ENCODE measurements at regions of chr5 and their contacts with region 1.

Region 1: DNA sequence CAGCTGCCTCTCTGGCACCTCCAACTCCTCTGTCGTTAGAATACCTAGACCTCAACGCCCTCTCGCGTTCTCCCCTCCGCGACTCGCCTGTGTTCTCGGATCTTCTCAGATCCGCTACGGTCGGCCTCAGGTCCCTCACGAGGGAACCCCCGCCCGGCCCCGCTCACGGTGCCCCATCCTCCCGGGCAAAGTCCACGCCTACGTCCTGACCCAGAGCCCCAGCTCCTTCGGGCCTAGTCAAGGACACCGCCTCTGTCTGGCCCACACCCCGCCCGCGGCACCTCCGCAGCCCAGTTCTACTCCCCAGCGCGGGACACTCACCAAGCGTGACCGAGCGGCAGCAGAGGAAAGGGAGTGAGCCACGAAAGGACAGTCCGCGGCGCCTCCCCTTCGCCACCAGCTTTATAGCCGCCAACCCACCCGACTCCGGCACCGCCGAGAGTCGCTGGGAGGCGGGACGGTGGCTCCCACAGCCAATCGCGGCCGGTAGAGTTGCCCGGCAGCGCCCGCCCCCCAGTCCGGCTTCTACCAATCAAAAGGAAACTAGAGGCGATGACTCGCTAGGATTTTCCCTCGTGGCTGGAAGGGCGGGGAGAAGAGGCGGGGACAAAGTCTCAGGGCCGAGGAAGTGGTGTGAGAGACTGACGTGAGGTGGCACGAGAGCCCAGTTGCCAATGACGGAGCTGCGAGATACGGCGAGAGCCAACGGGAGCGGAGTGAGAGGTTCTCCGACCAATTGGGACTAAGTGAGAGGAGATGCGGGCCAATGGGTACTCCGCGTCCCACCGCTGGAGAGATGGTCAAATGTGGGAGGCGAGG is at the start of gene HMGCS1:
- DNase-seq: peak; percentile 99
- ATAC-seq: peak; percentile 90
- H3K4me3 Mint-ChIP-seq: peak within 1 kb of the TSS; percentile 93
- H3K27ac Mint-ChIP-seq: peak within 1 kb of the TSS; percentile 96
- H3K4me1 Mint-ChIP-seq: peaks cover 71% of the 10 kb centered on the region
- H3K27me3 Mint-ChIP-seq: no peaks in the 10 kb centered on the region
- total RNA-seq, gene HMGCS1: 95.2 to 102 TPM

Region 2: GRCh38 chr5:42994246-42995151 is 318.7 kb before region 1 on chr5:
- CTCF ChIA-PET with region 1: interaction called, 3 read pairs
- POLR2A ChIA-PET with region 1: no interaction called
- intact Hi-C with region 1: loop called in 1 of 2 experiments (anchors 1 kb)
- DNase-seq: peak; percentile 93
- ATAC-seq: peak; percentile 67
- H3K4me3 Mint-ChIP-seq: peak overlapping the region; percentile 98
- H3K27ac Mint-ChIP-seq: peak overlapping the region; percentile 100
- H3K4me1 Mint-ChIP-seq: peaks cover 25% of the 10 kb centered on the region
- H3K27me3 Mint-ChIP-seq: no peaks in the 10 kb centered on the region

Region 3: GRCh38 chr5:43066799-43067741 is 246.2 kb before region 1 on chr5:
- CTCF ChIA-PET with region 1: no interaction called
- POLR2A ChIA-PET with region 1: interaction called, 6 read pairs
- intact Hi-C with region 1: loop called (anchors 1 to 2 kb)
- DNase-seq: peak; percentile 91
- ATAC-seq: peak; percentile 51
- H3K4me3 Mint-ChIP-seq: peak overlapping the region; percentile 97
- H3K27ac Mint-ChIP-seq: peak overlapping the region; percentile 99
- H3K4me1 Mint-ChIP-seq: peaks cover 37% of the 10 kb centered on the region
- H3K27me3 Mint-ChIP-seq: no peaks in the 10 kb centered on the region

Region 4: DNA sequence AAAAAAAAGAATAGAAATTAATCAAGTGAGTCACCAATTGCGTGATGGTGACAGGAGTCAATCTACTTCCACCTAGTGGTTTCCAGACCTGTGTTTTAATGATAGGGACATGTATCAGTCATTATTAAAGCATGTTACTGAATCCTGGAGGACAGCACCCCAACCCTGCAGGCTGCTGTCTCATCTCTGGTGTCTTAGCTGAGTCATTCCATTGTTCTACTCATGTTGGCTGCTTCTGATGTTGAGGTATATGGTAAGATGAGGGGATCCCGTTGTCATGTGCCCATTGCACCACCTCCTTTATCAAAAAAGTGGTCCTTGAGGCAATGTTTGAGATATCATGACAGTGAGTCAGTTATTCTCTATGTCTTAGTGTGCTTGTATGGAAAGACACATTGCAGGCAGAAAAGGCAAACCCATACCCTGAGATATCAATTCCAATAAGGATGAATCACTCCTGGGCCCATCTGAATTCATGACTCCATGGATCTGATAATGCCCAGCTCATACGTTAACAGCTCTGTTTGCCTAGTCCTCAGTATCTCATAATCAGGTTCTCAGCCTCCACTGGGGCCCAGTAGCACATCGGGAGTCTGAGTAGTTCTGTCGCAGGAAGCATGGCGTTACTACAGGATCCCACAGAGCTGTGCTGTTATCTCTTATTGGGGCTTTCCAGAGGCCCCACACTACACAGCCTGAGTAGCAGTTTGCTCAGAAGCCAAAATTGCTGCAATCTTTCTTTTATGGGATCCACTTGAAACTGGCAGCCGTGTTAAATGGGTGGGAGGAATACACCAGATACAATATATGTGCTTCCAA is 31.2 kb before region 1 on chr5:
- CTCF ChIA-PET with region 1: no interaction called
- POLR2A ChIA-PET with region 1: interaction called, 3 read pairs
- intact Hi-C with region 1: loop called in 1 of 2 experiments (anchors 1 kb)
- DNase-seq: peak; percentile 43
- ATAC-seq: peak; percentile 81
- H3K4me3 Mint-ChIP-seq: no peak overlapping the region
- H3K27ac Mint-ChIP-seq: no peak overlapping the region
- H3K4me1 Mint-ChIP-seq: peaks cover 11% of the 10 kb centered on the region
- H3K27me3 Mint-ChIP-seq: peaks cover 4% of the 10 kb centered on the region

Region 5: DNA sequence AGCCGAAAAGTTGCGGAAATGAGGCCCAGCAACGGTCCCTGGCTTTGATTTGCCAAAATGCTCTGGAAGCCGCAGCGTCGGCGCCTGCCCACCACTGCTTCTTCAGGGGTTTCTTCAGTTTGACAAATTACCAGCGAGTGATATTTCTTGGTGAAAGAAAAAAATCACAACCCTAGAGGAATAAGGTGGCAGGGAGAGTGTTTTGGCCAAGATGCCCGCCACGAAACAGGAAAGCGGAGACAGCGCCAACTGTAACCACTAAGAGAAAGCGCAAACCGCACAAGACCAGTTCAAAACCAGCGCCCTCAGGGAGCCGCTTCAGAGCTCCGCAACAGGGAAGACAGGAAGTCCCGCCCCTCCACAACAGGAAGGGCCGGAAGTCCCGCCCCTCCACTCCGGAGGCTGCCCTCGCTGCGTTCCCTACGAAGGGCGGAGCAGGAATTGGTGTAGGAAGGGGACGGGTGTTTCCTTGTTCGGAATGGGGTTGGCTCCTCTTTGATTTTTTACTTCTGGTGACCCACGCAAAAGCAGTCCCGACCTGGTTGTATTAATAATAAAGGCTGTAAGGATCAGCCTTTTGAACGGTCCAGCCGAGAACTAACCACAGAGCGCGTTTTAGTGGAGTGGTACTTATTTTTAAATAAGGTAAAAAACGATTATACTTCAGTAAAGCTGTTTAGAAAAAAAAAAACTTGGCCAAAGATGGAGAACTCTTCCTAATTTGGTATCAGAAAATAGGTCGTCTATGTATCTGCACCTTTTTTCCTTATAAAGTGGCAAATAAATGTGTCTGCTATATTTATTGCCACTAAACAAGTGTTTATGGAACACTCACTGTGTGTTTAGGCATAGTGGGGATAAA is 201.8 kb after region 1 on chr5 and contains the start of gene C5orf34:
- CTCF ChIA-PET with region 1: no interaction called
- POLR2A ChIA-PET with region 1: no interaction called
- intact Hi-C with region 1: loop called (anchors 1 to 10 kb)
- DNase-seq: peak; percentile 97
- ATAC-seq: peak; percentile 93
- H3K4me3 Mint-ChIP-seq: peak within 1 kb of the TSS; percentile 89
- H3K27ac Mint-ChIP-seq: peak within 1 kb of the TSS; percentile 99
- H3K4me1 Mint-ChIP-seq: peaks cover 23% of the 10 kb centered on the region
- H3K27me3 Mint-ChIP-seq: no peaks in the 10 kb centered on the region
- total RNA-seq, gene C5orf34: 14.4 to 16.8 TPM

Measured in activated CD4-positive, alpha-beta T cell treated with anti-CD3 and anti-CD28 coated beads for 36 hours (primary cell).